ENCODE measurements at regions of chr7 and their contacts with region 1.

Region 1: DNA sequence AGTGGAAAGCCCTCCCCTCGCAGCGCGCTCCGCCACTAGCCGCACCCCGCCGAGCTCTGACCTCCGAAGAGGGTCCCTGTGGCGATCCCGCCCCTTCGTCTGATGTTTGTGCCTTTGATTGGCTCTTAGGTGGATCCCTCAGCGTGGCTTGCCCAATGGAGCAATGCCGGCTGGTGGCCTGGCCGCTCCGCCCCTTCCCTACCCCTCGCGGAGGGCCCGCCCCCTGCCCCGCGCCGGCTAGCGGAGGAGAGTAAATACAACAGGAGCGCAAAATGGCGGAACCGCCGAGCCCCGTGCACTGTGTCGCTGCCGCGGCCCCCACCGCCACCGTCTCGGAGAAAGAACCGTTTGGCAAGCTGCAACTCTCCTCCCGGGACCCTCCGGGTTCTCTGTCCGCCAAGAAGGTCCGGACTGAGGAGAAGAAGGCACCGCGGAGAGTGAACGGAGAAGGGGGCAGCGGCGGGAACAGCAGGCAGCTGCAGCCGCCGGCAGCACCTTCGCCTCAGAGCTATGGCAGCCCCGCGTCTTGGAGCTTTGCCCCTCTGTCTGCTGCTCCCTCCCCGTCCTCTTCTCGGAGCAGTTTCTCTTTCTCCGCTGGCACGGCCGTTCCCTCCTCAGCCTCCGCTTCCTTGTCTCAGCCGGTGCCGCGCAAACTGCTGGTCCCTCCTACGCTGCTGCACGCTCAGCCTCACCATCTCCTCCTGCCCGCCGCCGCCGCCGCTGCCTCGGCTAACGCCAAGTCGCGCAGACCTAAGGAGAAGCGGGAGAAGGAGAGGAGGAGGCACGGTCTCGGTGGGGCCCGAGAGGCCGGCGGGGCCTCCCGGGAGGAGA is at the start of gene RSBN1L:
- DNase-seq: peak; percentile 99
- ATAC-seq: peak; percentile 92 to 96
- H3K4me3 ChIP-seq: peak within 1 kb of the TSS; percentile 90 to 100 (median 96)
- H3K27ac ChIP-seq: peak within 1 kb of the TSS; percentile 97 to 99 (median 98)
- H3K4me1 ChIP-seq: peaks cover 39 to 40% of the 10 kb centered on the region in 2 donors
- H3K27me3 ChIP-seq: no peaks in the 10 kb centered on the region
- CTCF ChIP-seq: peak; percentile 24 to 54 (median 43)
- POLR2A ChIP-seq: peak; percentile 90 to 98
- total RNA-seq, gene RSBN1L: 5.1 to 11.7 (median 8.7) TPM

Region 2: GRCh38 chr7:77536413-77537135 is 159.8 kb before region 1 on chr7:
- in situ Hi-C with region 1: no loop called
- intact Hi-C with region 1: loop called (anchors 1 kb)
- DNase-seq: peak; percentile 96 to 97
- ATAC-seq: peak; percentile 84 to 87
- H3K4me3 ChIP-seq: peak overlapping the region; percentile 84 to 99 (median 88)
- H3K27ac ChIP-seq: peak overlapping the region; percentile 89 to 99 (median 92)
- H3K4me1 ChIP-seq: peaks cover 16 to 23% of the 10 kb centered on the region in 2 donors
- H3K27me3 ChIP-seq: no peaks in the 10 kb centered on the region
- CTCF ChIP-seq: no peak
- POLR2A ChIP-seq: peak; percentile 89 to 96

Region 3: DNA sequence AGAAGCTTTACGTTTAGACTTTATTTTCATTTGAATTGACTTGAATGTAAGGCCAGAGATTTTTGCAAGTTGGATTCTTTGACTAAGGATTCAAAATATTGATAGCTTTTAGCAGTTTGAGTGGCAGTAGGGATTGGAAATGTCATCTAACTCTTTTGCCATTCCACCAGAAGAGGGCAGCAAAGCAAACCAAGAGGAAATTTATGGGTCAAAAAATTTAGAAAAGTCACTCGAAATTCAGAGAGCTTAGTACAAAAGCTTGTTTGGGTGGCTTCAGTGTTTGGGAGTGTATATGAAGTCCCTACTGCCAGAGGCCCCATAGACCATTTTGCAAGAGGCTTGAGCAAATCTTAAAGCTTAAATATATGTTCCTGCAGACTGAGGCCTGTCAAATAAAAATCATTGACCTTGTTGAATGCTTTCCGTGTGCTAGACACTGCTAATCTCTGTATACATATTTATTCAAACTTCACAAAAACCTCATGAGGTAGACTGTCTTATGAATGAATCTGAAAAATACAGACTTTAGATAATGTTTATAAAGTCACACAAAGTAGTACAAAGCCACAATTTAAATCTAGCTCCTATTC is 44.7 kb before region 1 on chr7:
- in situ Hi-C with region 1: no loop called
- intact Hi-C with region 1: no loop called
- DNase-seq: no peak
- ATAC-seq: peak in 1 of 2 donors; percentile 39
- H3K4me3 ChIP-seq: no peak overlapping the region
- H3K27ac ChIP-seq: no peak overlapping the region
- H3K4me1 ChIP-seq: no peaks in the 10 kb centered on the region
- H3K27me3 ChIP-seq: no peaks in the 10 kb centered on the region
- CTCF ChIP-seq: peak; percentile 53 to 76 (median 65)
- POLR2A ChIP-seq: no peak

Region 4: DNA sequence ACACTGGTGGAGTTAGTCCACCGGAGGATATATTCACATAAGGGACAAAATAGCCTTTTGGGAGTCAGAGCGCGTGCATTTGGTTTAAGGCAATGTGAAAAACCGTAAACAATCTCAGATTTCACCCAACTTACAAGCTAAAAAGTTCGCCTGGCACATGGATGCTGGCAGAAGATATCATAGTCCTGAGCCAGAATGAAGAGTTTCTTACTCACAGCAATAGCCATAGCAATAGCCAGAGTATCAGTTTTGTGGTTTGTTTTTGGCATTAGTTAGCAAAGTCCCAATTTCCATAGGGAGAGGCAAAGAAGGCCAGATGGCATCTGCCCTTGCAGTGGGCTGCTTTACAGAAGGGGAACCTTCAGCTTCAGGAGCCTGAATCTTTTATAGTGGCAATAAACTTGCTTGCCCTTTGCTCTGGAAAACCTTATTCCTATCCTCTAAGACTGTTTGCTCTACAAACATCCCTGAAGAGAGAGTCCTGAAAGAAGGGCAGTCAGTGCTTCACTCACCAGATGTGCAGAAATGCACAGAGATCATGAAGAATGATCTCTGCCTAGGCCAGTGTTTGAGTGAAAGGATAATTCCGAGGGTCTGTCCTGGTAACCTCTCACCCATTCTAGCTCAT is 28.8 kb before region 1 on chr7:
- in situ Hi-C with region 1: no loop called
- intact Hi-C with region 1: no loop called
- DNase-seq: no peak
- ATAC-seq: peak in 1 of 2 donors; percentile 36
- H3K4me3 ChIP-seq: no peak overlapping the region
- H3K27ac ChIP-seq: no peak overlapping the region
- H3K4me1 ChIP-seq: peaks cover 0 to 6% of the 10 kb centered on the region in 2 donors
- H3K27me3 ChIP-seq: no peaks in the 10 kb centered on the region
- CTCF ChIP-seq: no peak
- POLR2A ChIP-seq: no peak

Region 5: DNA sequence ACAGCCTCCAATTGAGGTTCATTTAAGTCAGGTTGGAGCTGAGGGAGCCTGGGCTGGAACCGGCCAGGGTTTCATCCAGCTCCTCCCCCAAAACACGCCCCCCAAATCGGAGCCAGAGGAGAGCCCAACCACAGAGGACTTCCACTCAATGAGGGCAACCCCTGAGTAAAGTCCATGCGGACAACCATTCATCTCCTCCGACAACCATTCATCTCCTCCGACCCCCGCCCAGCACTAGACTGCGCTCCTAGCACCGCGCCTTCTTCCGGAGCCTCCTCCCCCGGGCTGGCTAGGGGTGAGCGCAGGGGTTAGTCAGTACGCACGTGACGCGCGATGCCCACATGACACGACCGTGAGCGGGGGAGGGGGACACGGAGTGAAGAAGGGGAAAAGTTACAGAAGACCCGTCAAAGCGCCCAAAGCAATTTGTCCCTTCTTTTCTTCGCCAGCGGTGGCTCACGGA is 1755.7 kb after region 1 on chr7:
- in situ Hi-C with region 1: no loop called
- intact Hi-C with region 1: loop called (anchors 10 kb)
- DNase-seq: peak; percentile 66 to 72
- ATAC-seq: peak; percentile 77 to 81
- H3K4me3 ChIP-seq: peak overlapping the region; percentile 78 to 91 (median 84)
- H3K27ac ChIP-seq: peak overlapping the region; percentile 79 to 86 (median 84)
- H3K4me1 ChIP-seq: peaks cover 0 to 6% of the 10 kb centered on the region in 2 donors
- H3K27me3 ChIP-seq: no peaks in the 10 kb centered on the region
- CTCF ChIP-seq: no peak
- POLR2A ChIP-seq: peak; percentile 57 to 71

Measured in gastrocnemius medialis (tissue), 4 donors.